ENCODE measurements at regions of chr5 and their contacts with region 1.

Region 1: GRCh38 chr5:25604682-25605081 is 959.9 kb upstream of the CDH10 start:
- DNase-seq: no peak

Region 2: DNA sequence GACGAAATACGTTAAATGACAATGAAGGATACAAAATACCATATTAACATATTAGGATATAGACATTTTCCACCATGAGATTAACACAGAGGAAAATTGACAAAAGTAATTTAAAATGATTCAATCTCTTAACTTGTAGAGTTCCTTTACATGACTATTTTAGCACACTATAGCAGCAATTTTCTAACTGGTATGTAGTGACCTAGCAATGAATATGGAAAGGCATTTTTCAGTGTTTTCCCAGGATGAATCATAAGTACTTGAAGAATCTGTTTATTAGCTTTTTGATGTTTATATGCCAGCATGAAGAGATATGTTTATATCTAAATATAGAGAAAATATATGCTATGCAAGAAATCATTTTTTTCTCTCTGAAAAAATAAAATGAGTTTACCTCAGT is 177.4 kb before region 1 on chr5:
- intact Hi-C with region 1: no loop called
- DNase-seq: no peak

Region 3: DNA sequence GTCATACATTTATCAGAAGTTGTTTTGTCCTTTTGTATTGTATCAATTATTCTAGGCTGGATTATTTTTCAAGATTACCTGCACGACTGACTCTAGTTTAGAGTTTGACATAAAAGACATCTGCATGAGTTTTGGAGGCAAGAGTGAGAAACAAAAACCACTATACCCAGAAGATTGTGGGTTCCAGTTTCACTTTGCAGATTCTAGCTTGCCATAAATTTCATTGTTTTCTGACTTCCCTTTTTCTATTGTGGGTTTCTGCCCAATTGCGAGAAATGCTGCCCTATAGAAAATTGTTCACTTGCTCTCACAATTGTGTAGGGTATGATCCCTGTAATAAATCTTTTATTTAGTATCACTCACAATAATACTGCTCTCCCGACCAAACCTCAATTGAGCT is 83.5 kb after region 1 on chr5:
- intact Hi-C with region 1: no loop called
- DNase-seq: no peak

Region 4: GRCh38 chr5:25744908-25745307 is 140.2 kb after region 1 on chr5:
- intact Hi-C with region 1: no loop called
- DNase-seq: no peak

Region 5: DNA sequence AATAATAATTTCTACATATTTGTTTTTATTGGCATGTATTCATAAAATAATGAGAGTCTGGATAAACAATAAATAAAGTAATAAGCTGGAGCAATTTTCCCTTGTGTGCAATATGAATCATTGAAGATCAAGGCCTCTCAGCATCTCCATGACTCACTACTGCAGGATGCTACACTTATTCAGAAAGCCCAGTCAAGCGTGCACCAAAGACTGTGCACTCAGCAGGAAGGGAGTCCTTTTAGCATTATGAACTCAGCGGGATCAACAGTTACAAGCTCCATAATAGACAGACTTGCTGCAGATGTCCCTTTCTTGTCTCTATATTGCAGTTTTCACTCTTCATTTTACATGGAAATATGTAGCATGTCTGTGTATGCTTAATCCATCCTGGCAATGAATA is 948.4 kb after region 1 on chr5:
- intact Hi-C with region 1: loop called in 1 of 2 experiments (anchors 10 kb)
- DNase-seq: no peak